ENCODE measurements at regions of chr11 and their contacts with region 1.

Region 1: GRCh38 chr11:117282956-117283355 is 8.2 kb upstream of the BACE1-AS start:
- DNase-seq: no peak

Region 2: DNA sequence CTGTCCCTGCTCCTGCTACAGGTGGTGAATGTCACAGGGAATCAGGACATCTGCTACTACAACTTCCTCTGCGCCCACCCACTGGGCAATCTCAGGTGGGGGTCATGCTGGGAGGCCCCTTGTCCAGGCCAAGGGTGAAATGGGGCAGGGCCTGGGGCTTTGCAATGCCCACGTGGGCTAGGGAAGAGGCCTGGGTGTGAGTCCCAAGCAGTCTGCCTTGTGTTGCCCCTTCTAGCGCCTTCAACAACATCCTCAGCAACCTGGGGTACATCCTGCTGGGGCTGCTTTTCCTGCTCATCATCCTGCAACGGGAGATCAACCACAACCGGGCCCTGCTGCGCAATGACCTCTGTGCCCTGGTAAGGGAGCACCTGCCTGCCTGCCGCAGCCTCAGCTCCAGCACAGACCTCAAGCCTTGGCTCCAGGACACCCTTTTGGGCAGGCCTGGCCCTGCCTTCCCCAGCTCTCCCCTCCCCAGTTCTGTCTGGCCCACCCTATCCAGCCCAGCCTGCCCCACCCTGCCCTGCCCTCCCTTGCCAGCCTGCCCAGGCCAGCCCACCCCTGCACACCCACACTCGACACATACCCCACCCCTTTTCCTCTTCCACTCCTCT is 92.9 kb before region 1 on chr11:
- intact Hi-C with region 1: loop called in 1 of 2 experiments (anchors 1 kb)
- DNase-seq: peak; percentile 75